Ascending aorta (tissue), 2 donors: ENCODE measurements at regions of chr19 and their contacts with region 1.

Region 1: DNA sequence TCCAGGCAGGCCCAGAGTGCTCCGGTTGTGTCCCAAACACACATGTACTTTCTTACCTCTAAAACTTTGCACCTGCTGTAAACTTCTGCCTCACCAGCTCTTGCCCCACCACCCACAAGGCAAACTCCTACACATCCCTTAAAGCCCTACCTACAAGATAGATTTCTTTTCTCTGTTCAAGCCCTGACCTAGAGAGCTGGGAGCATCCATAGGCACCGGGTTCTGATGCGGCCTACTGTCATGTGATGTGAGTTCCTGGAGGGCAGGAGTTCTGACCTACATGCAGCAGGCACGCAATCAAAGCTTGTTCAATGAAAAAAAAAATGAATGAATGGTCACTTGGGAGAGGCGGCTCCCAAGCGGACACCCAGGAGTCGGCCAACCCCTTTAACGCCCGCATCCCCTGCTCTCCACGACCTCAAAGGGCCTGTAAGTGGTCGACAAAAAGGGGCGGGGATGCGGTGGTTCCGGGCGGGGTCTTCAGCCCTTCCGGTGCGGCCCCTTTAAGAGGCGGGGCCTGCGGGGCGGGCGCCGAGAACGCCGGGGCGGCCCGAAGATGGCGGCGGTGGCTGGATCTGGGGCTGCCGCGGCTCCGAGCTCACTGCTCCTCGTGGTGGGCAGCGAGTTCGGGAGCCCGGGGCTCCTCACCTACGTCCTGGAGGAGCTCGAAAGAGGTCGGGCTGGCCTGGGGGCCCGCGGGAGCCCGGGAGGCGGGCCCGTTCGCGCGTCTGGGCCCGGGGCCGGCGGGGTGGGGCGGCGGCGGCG is at the start of gene MAP1S:
- DNase-seq: peak in 1 of 2 donors; percentile 72
- H3K4me3 ChIP-seq: peak within 1 kb of the TSS; percentile 86 to 99
- H3K27ac ChIP-seq: peak within 1 kb of the TSS; percentile 50 to 81
- H3K4me1 ChIP-seq: peaks cover 12 to 38% of the 10 kb centered on the region in 2 donors
- H3K27me3 ChIP-seq: no peaks in the 10 kb centered on the region
- CTCF ChIP-seq: no peak
- total RNA-seq, gene MAP1S: 111 TPM

Region 2: DNA sequence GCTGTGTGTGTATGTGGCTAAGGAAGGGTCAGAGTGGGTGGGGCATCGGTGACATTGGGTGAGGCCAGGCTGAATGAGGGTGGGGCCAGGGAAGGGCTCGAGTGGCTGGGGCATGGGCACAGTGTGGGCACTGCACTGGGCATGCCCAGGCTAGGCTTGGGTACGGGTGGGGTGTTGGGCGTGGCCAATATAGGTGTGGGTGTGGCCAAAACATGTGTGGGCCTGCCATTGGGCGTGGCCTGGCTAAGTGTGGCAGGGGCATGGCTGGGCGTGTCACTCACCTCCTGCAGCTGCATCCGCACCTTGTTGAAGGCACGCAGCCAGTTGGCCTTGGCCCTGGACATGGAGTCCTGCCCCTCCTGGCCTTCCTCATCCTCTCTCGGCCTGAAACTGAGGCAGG is 64.1 kb before region 1 on chr19:
- intact Hi-C with region 1: loop called (anchors 5 kb)
- DNase-seq: no peak
- H3K4me3 ChIP-seq: no peak overlapping the region
- H3K27ac ChIP-seq: no peak overlapping the region
- H3K4me1 ChIP-seq: peaks cover 3 to 13% of the 10 kb centered on the region in 2 donors
- H3K27me3 ChIP-seq: no peaks in the 10 kb centered on the region
- CTCF ChIP-seq: no peak

Region 3: DNA sequence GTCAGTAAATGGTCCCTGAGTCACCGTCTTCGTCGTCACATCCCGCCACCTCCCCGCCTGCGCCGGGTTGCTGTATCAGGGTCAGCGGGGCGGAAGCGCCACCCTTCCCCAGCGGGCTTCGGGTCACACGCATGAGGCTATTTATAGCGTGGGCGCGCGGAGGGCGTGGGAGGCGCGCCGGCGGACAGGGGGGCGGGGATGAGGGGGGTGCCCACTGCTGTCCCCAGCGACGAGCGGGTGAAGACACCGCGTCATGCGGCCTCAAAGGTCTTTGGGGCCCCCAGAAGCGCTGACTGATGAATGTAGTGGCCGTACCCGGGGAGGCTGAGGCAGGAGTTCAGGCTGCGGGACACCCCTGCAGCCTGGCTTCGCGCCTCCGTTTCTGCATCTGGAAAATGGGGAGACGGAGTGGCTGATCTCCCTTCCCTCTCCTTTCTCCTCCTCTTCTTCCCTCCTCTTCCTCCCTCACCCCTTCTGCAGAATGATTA is 38.9 kb before region 1 on chr19:
- intact Hi-C with region 1: loop called (anchors 1 kb)
- DNase-seq: peak; percentile 72 to 95
- H3K4me3 ChIP-seq: peak overlapping the region; percentile 58 to 61
- H3K27ac ChIP-seq: peak overlapping the region; percentile 61 to 81
- H3K4me1 ChIP-seq: peaks cover 4 to 9% of the 10 kb centered on the region in 2 donors
- H3K27me3 ChIP-seq: peaks cover 3% of the 10 kb centered on the region
- CTCF ChIP-seq: peak in 1 of 3 experiments; percentile 8

Region 4: DNA sequence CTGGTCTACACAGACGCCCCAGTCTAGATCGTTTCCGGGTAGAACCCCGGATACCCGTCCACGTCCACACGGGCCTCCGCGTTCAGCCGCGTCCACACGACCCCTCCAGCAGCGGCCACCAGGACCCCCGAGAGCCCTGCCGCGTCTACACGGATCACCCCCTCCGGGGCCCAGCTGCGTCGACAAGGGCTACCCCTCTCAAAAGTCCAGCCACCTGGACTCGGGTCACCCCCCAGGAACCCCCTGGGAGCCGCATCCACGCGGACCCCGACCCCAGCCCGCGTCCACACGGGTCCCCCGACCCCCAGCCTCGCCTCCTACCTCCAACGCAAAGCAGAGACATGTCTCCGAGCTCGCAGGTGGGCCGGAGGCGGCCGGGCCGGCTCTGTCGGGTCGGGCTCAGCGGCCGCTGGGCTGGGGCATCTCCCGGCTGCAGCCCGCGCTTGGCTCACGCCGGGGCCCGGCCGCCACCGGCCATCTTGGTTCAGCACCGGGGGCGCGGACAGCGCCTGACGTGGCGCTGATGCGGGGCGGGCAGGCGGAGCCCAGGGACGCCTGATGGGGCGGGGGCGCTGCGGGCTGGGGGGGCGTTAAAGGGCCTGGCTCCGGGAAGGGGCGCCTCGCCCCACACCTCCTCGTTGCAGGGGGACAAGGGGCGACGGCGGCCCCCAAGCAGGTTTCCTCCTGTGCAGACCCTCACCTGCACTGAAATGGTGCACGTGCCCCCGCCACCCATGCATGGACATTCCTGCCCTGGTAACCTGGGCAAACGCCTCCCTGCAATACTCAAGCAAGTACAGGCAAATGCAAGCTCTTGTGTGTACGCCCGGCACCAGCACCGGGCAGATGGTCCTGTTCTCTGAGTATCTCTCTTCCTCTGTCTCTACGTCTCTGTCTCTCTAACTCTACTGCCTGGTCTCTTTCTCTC is 31.0 kb before region 1 on chr19 and contains the start of gene UNC13A:
- intact Hi-C with region 1: loop called (anchors 2 kb)
- DNase-seq: no peak
- H3K4me3 ChIP-seq: peak within 1 kb of the TSS; percentile 42 to 55
- H3K27ac ChIP-seq: peak within 1 kb of the TSS; percentile 4 to 11
- H3K4me1 ChIP-seq: peaks cover 0 to 13% of the 10 kb centered on the region in 2 donors
- H3K27me3 ChIP-seq: peaks cover 3% of the 10 kb centered on the region
- CTCF ChIP-seq: no peak
- total RNA-seq, gene UNC13A: 2.2 TPM